B cell (primary cell): ENCODE measurements at regions of chr15 and their contacts with region 1.

Region 1: GRCh38 chr15:64989416-64990167 is at the start of gene SPG21:
- DNase-seq: peak; percentile 99
- ATAC-seq: peak; percentile 95
- H3K4me3 ChIP-seq: peak within 1 kb of the TSS; percentile 70 to 97 (median 88)
- H3K4me3 Mint-ChIP-seq: peak within 1 kb of the TSS; percentile 97
- H3K27ac ChIP-seq: peak within 1 kb of the TSS; percentile 83 to 94
- H3K27ac Mint-ChIP-seq: peak within 1 kb of the TSS; percentile 96
- H3K4me1 ChIP-seq: peaks cover 28 to 31% of the 10 kb centered on the region in 2 donors
- H3K4me1 Mint-ChIP-seq: peaks cover 48% of the 10 kb centered on the region
- H3K27me3 ChIP-seq: no peaks in the 10 kb centered on the region
- H3K27me3 Mint-ChIP-seq: no peaks in the 10 kb centered on the region
- CTCF ChIP-seq: no peak
- total RNA-seq, gene SPG21: 94.4 and 95.5 TPM in 2 replicates

Region 2: GRCh38 chr15:64825431-64826294 is 163.9 kb before region 1 on chr15 and contains the start of gene PIF1:
- CTCF ChIA-PET with region 1: no interaction called
- POLR2A ChIA-PET with region 1: no interaction called
- intact Hi-C with region 1: loop called (anchors 5 kb)
- DNase-seq: peak; percentile 94
- ATAC-seq: peak; percentile 95
- H3K4me3 ChIP-seq: peak within 1 kb of the TSS; percentile 42 to 73 (median 56)
- H3K4me3 Mint-ChIP-seq: peak within 1 kb of the TSS; percentile 91
- H3K27ac ChIP-seq: peak within 1 kb of the TSS; percentile 31 to 73
- H3K27ac Mint-ChIP-seq: peak within 1 kb of the TSS; percentile 89
- H3K4me1 ChIP-seq: peaks cover 22 to 33% of the 10 kb centered on the region in 2 donors
- H3K4me1 Mint-ChIP-seq: peaks cover 31% of the 10 kb centered on the region
- H3K27me3 ChIP-seq: peaks cover 0 to 14% (median 2%) of the 10 kb centered on the region in 4 experiments
- H3K27me3 Mint-ChIP-seq: no peaks in the 10 kb centered on the region
- CTCF ChIP-seq: no peak
- total RNA-seq, gene PIF1: 2.0 and 2.8 TPM in 2 replicates

Region 3: GRCh38 chr15:65008983-65009382 is 19.4 kb after region 1 on chr15:
- CTCF ChIA-PET with region 1: interaction called, 10 read pairs
- POLR2A ChIA-PET with region 1: interaction called, 3 read pairs
- intact Hi-C with region 1: no loop called
- DNase-seq: peak; percentile 32
- ATAC-seq: peak; percentile 62
- H3K4me3 ChIP-seq: no peak overlapping the region
- H3K4me3 Mint-ChIP-seq: no peak overlapping the region
- H3K27ac ChIP-seq: no peak overlapping the region
- H3K27ac Mint-ChIP-seq: no peak overlapping the region
- H3K4me1 ChIP-seq: no peaks in the 10 kb centered on the region
- H3K4me1 Mint-ChIP-seq: peaks cover 2% of the 10 kb centered on the region
- H3K27me3 ChIP-seq: no peaks in the 10 kb centered on the region
- H3K27me3 Mint-ChIP-seq: no peaks in the 10 kb centered on the region
- CTCF ChIP-seq: peak; percentile 12

Region 4: DNA sequence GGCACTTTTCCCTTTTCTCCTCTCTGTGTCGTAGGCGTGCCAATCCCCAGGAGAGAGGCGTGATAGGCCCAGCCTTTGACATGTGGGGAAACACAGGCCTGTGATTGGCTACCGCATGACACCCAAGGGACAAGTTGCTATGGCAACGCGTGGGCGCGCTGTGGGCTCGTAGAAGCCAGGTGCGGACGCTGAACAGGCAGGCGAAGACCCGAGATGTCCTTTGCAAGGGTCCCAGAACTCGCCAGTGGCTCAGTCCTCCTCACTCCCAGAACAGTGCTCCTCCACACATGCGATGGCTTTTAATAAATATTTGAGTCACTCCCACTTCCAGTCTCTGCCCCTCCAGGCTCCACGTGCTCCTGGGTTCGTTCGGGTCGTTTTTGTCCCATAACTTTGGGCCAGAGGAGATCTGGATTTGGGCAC is 59.8 kb after region 1 on chr15:
- CTCF ChIA-PET with region 1: no interaction called
- POLR2A ChIA-PET with region 1: no interaction called
- intact Hi-C with region 1: loop called (anchors 1 kb)
- DNase-seq: peak; percentile 96
- ATAC-seq: peak; percentile 98
- H3K4me3 ChIP-seq: peak overlapping the region; percentile 14 to 57 (median 34)
- H3K4me3 Mint-ChIP-seq: peak overlapping the region; percentile 81
- H3K27ac ChIP-seq: no peak overlapping the region
- H3K27ac Mint-ChIP-seq: peak overlapping the region; percentile 80
- H3K4me1 ChIP-seq: peaks cover 13 to 18% of the 10 kb centered on the region in 2 donors
- H3K4me1 Mint-ChIP-seq: peaks cover 15% of the 10 kb centered on the region
- H3K27me3 ChIP-seq: peaks cover 0 to 6% (median 0%) of the 10 kb centered on the region in 4 experiments
- H3K27me3 Mint-ChIP-seq: peaks cover 4% of the 10 kb centered on the region
- CTCF ChIP-seq: no peak